ENCODE measurements at regions of chr11 and their contacts with region 1.

Region 1: GRCh38 chr11:64358907-64359711 is at the start of gene RPS6KA4:
- DNase-seq: peak; percentile 60
- H3K4me3 ChIP-seq: peak within 1 kb of the TSS; percentile 11 to 91 (median 33)
- H3K27ac ChIP-seq: peak within 1 kb of the TSS; percentile 70
- H3K4me1 ChIP-seq: peaks cover 22% of the 10 kb centered on the region
- H3K27me3 ChIP-seq: no peaks in the 10 kb centered on the region
- CTCF ChIP-seq: no peak
- POLR2A ChIP-seq: peak; percentile 92
- total RNA-seq, gene RPS6KA4: 41.8 and 44.1 TPM in 2 replicates

Region 2: DNA sequence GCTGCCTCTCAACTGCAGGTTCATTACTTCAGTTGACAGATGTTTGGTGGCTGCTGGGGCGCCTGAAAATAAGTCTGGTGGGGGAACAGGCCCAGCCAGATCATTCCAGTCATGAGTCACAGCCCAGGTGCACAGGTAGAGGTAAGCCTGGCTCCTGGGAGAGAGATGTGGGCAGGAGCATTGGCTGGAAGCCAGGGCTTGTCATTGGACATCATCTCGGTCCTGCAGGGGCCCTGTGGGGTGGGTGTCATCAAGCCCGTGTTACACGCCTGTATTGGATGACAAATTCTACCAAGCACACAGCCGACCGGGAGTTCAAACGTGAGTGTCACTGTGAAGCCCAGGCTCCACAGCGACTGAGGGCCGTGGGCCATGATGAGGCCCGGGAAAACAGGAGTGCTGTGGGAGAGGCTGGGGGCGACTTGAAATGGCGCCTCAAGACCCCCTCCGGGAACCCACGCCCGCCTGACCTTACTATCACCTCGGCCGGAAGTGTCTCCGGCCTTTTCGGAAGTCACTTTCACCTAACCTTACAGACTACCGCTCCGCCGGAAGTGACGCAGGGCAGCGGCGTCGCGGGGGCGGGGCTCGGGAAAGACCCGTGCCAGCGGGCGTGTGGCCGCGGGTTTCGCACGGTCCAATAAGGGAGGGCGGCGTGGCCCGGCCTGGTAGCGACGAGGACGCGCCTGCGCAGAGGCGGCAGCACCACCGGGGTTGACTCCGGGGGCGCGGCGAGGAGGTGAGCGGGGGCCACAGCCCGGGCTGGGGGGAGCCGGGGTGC is 118.5 kb before region 1 on chr11 and contains the start of gene FKBP2:
- CTCF ChIA-PET with region 1: interaction called, 4 read pairs
- POLR2A ChIA-PET with region 1: no interaction called
- dilution Hi-C with region 1: no loop called
- intact Hi-C with region 1: loop called (anchors 5 kb)
- DNase-seq: peak; percentile 97
- H3K4me3 ChIP-seq: peak within 1 kb of the TSS; percentile 67 to 93 (median 67)
- H3K27ac ChIP-seq: peak within 1 kb of the TSS; percentile 88
- H3K4me1 ChIP-seq: peaks cover 15% of the 10 kb centered on the region
- H3K27me3 ChIP-seq: no peaks in the 10 kb centered on the region
- CTCF ChIP-seq: no peak
- POLR2A ChIP-seq: peak; percentile 1
- total RNA-seq, gene FKBP2: 48.4 and 48.5 TPM in 2 replicates

Region 3: DNA sequence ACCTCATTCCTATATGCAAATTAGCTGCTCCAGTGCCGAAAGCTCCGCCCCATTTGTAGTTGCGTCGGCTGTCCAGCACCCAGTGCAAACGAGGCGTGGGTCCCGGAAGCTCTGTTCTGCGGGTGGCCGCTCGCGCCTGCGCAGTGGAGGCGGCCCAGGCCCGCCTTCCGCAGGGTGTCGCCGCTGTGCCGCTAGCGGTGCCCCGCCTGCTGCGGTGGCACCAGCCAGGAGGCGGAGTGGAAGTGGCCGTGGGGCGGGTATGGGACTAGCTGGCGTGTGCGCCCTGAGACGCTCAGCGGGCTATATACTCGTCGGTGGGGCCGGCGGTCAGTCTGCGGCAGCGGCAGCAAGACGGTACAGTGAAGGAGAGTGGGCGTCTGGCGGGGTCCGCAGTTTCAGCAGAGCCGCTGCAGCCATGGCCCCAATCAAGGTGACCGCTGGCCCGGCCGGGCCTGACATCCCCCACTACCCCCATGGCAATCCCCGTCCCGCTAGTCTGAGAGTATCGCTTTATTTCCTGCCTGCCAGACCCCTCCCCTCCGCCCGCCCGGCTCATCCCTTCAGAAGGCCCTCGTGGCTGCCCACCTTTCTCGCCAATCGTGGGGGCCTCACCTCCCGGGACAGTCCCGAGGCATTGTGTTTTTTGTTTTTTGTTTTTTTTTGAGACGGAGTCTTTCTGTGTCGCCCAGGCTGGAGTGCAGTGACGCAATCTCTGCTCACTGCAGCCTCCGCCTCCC is 41.0 kb before region 1 on chr11 and contains the start of gene PRDX5:
- CTCF ChIA-PET with region 1: interaction called, 72 read pairs
- POLR2A ChIA-PET with region 1: no interaction called
- dilution Hi-C with region 1: no loop called
- intact Hi-C with region 1: loop called (anchors 1 kb)
- DNase-seq: peak; percentile 96
- H3K4me3 ChIP-seq: peak within 1 kb of the TSS; percentile 57 to 76 (median 75)
- H3K27ac ChIP-seq: peak within 1 kb of the TSS; percentile 87
- H3K4me1 ChIP-seq: peaks cover 10% of the 10 kb centered on the region
- H3K27me3 ChIP-seq: no peaks in the 10 kb centered on the region
- CTCF ChIP-seq: peak in 1 of 2 donors; percentile 32
- POLR2A ChIP-seq: peak; percentile 64
- total RNA-seq, gene PRDX5: 199 and 202 TPM in 2 replicates

Region 4: DNA sequence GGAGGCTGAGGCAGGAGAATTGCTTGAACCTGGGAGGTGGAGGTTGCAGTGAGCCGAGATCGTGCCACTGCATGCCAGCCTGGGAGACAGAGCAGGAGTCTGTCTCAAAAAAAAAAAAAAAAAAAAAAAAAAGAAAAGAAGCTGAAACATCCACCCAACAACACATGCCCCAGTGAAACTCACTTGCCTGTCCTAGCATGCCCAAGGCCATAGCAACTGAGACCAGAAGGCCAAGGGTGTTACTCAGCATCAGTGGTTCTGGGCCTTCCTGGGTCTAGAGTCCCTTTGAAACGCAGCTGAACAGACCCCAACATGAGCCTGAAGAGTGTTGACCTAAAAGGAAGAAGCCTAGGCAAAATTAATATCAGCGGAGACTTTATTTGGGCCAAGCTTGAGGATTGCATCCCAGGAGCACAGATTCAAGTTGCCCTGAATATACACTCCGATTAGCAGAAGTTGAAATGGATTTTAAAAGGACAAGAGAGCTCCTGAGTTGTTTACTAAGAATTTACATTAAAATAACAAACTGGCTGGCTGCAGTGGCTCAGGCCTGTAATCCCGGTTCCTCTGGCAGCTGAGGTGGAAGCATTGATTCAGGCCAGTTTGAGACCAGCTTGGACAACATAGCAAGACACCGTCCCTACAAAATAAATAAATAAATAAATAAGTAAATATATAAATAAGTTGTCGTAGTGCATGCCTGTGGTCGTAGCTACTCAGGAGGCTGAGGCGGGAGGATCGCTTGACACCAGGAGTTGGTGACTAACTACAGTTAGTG is 34.2 kb before region 1 on chr11:
- CTCF ChIA-PET with region 1: interaction called, 12 read pairs
- POLR2A ChIA-PET with region 1: no interaction called
- dilution Hi-C with region 1: no loop called
- intact Hi-C with region 1: no loop called
- DNase-seq: no peak
- H3K4me3 ChIP-seq: no peak overlapping the region
- H3K27ac ChIP-seq: no peak overlapping the region
- H3K4me1 ChIP-seq: no peaks in the 10 kb centered on the region
- H3K27me3 ChIP-seq: no peaks in the 10 kb centered on the region
- CTCF ChIP-seq: no peak
- POLR2A ChIP-seq: no peak

Region 5: DNA sequence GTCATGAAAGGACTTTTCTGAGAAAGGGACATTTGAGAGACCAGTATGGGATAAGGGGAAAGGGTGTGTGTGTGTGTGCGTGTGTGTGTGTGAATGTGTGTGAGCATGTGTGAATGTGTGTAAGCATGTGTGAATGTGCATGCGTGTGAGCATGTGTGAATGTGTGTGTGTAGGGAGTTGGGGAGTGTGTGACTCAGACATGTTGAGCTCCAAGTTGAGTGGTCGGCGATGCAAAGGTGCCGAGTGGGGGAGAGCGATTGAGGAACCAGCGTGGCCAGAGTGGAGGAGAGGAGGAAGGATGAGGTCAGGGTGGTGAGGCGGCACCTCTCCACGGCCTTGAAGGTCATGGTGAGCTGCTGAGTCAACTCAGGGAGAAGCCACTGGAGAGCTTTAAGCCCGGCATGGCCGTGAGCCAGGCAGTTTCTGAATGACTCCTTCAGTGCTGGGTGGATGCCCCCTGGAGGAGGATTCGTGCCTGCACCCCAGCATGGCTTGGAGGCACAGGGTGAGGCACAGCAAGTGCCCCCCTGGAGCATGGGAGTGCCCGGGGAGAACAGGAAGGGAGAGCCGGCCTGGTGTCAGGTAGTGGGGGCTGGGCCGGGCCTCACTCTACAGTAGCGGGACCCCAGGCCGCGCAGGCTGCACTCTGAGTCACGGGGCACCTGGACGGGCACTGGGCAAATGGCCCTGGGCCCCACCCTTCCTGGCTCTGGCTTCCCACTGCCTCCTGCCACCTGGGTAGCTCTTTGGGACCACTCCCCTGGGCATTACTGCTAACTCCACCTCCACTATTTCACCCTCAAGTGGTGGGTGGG is 27.3 kb before region 1 on chr11:
- CTCF ChIA-PET with region 1: interaction called, 39 read pairs
- POLR2A ChIA-PET with region 1: no interaction called
- dilution Hi-C with region 1: no loop called
- intact Hi-C with region 1: no loop called
- DNase-seq: peak; percentile 74
- H3K4me3 ChIP-seq: no peak overlapping the region
- H3K27ac ChIP-seq: no peak overlapping the region
- H3K4me1 ChIP-seq: peaks cover 3% of the 10 kb centered on the region
- H3K27me3 ChIP-seq: no peaks in the 10 kb centered on the region
- CTCF ChIP-seq: peak; percentile 64 to 82
- POLR2A ChIP-seq: no peak

Region 6: DNA sequence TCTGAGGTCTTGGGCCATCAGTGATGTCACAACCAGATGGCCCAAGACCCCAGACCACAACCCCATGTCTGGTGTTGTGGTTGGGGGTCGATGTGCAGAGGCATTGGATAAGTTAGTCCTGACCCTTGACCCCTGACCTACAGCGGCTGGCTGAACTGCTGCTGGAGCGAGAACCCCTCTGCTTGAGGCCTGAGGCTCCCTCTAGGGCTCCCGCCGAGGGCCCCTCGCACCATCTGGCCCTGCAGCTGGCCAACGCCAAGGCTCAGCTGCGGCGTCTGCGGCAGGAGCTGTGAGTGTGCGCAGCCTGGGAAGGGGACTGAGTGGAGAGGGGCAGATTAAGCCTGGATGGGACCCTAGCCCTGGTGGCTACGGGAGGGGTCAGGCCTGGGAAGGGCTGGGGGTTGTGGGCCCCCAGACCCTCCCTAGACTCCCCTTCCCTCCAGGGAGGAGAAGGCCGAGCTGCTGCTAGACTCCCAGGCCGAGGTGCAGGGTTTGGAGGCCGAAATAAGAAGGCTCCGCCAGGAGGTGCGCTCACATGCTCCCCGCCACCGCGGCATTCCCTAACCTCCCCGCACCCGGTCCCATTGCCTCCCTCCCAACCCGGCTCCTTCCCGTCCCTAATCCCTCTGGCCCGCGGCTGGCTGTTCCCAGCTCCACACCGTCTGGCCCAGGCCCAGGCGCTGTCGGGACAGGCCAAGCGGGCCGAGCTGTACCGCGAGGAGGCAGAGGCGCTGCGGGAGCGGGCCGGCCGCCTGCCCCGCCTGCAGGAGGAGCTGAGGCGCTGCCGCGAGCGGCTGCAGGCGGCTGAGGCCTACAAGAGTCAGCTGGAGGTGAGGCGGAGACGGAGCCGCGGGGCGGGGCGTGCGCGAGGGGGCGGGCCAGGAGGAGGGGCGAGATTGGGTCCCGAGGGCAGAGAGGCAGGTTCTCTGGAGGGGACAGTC is 17.0 kb before region 1 on chr11:
- CTCF ChIA-PET with region 1: interaction called, 107 read pairs
- POLR2A ChIA-PET with region 1: no interaction called
- dilution Hi-C with region 1: no loop called
- intact Hi-C with region 1: no loop called
- DNase-seq: peak; percentile 87
- H3K4me3 ChIP-seq: peak overlapping the region in 1 of 3 experiments; percentile 16
- H3K27ac ChIP-seq: no peak overlapping the region
- H3K4me1 ChIP-seq: no peaks in the 10 kb centered on the region
- H3K27me3 ChIP-seq: no peaks in the 10 kb centered on the region
- CTCF ChIP-seq: peak; percentile 34 to 62
- POLR2A ChIP-seq: no peak

Measured in endothelial cell of umbilical vein (primary cell).